Activated CD4-positive, alpha-beta T cell treated with anti-CD3 and anti-CD28 coated beads, Interleukin-2, amount 10 ng/mL, durations not matched to agents 24 days and 14 days (primary cell): ENCODE measurements at regions of chr14 and their contacts with region 1.

Region 1: DNA sequence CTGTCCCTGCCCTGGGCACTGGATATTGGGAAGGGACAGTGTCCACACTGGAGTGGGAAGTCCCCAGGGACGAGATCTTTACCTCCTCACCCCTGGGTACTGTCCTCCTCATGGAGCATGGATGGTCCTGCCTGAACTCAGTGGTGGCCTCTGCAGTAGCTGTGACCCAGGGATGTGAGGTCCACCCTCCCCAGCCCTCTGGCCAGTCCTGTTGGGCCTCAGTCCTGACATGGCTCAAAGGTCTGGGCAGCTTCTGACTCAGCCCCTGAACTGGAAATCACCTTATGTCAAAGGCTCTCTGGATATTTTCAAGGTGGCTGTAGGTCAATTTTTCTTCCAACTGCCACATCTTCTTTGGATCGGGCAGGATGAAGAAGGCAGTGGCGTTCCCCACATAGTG is 24.4 kb downstream of the SERPINA1 start:
- DNase-seq: no peak
- H3K4me3 Mint-ChIP-seq: no peak overlapping the region
- H3K27ac Mint-ChIP-seq: no peak overlapping the region
- H3K4me1 Mint-ChIP-seq: peaks cover 2% of the 10 kb centered on the region
- H3K27me3 Mint-ChIP-seq: peaks cover 4% of the 10 kb centered on the region

Region 2: DNA sequence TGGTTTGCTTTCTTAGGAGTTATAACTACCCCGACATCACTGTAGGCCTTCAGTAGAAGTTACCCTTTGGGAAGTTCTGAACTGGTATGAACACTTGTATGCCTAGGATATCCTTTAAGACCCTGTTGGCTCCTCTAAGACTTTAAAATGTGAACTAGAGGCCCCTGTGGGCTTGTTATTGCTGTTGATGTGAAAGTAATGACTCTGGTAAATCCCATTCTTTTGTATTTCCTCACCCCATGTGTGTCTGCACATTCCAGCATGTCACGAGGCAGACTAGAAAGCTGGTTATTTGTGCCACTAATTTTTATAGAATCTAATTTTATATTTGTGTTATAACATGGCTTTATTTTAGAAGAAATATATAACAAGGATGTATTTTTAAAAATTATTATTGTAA is 119.9 kb before region 1 on chr14:
- intact Hi-C with region 1: no loop called
- DNase-seq: no peak
- H3K4me3 Mint-ChIP-seq: no peak overlapping the region
- H3K27ac Mint-ChIP-seq: no peak overlapping the region
- H3K4me1 Mint-ChIP-seq: no peaks in the 10 kb centered on the region
- H3K27me3 Mint-ChIP-seq: peaks cover 2% of the 10 kb centered on the region

Region 3: DNA sequence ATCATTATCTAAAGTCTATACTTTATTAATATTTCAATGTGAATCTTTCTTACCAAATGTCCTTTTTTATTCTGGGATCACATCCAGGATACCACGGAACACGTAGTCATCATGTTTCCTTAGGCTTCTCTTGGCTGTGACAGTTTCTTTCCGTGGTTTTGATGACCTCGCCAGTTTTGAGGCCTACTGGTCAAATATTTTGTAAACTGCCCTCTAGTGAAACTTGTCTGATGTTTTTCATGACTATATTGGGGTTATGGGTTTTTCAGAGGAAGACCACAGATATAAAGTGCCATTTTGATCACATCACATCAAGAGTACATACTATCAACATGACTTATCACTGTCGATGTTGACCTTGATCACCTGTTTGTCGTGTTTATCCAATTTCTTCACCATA is 26.8 kb before region 1 on chr14:
- intact Hi-C with region 1: no loop called
- DNase-seq: no peak
- H3K4me3 Mint-ChIP-seq: no peak overlapping the region
- H3K27ac Mint-ChIP-seq: no peak overlapping the region
- H3K4me1 Mint-ChIP-seq: peaks cover 8% of the 10 kb centered on the region
- H3K27me3 Mint-ChIP-seq: peaks cover 10% of the 10 kb centered on the region

Region 4: GRCh38 chr14:94380225-94381148 is 16.4 kb after region 1 on chr14:
- intact Hi-C with region 1: loop called (anchors 1 kb)
- DNase-seq: no peak
- H3K4me3 Mint-ChIP-seq: no peak overlapping the region
- H3K27ac Mint-ChIP-seq: no peak overlapping the region
- H3K4me1 Mint-ChIP-seq: no peaks in the 10 kb centered on the region
- H3K27me3 Mint-ChIP-seq: no peaks in the 10 kb centered on the region

Region 5: DNA sequence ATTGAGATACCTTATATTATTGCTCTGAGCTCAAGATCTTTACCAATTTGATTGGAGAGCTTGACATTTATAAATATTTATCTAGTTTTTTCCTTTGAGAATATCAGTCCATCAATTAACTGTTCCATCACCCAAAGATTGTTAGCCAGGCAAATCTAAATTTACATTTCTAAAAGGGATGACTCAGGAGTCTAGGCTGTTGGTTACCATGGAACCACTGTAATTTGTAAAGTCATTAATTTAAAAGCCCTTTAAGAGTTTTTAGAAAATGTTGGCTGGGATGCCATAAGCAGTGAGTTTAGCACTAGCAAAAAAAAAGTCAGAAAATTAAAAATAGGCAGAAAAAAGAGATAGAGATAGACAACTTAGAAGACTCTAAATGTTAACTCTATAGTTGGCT is 43.9 kb after region 1 on chr14:
- intact Hi-C with region 1: no loop called
- DNase-seq: no peak
- H3K4me3 Mint-ChIP-seq: no peak overlapping the region
- H3K27ac Mint-ChIP-seq: no peak overlapping the region
- H3K4me1 Mint-ChIP-seq: no peaks in the 10 kb centered on the region
- H3K27me3 Mint-ChIP-seq: peaks cover 14% of the 10 kb centered on the region